ENCODE measurements at regions of chr2 and their contacts with region 1.

Region 1: DNA sequence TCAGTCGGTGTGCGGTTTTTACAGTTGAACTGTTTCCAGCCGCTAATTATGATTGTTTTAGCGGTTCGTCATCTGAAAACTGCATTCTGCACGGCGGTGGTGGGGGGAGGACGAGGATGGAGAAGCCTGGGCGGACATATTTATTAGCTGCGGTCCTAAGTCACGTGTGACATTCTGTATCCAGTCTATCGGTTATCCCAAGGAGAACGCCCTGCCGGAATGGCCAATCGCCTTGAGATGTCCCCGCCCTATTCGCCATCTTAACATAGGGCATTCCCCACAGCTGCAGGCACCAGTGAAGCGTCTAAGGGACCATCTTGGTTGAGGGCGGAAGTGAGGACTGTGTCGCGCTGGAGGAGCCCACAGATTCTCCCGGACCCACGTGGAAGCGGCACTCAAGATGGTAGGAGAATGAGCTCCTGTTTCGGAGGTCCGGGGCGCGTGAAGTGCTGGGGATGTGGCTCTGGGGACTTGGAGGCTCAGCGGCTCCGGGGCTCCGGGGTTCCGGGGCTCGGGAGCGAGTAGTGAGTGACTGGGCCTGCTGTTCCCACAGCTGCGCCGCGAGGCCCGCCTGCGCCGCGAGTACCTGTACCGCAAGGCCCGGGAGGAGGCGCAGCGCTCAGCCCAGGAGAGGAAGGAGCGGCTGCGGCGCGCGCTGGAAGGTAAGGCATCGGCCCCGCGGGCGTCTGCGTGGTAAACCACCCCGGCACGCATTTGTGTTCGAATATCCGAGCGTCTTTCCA is at the start of gene IMP4:
- DNase-seq: peak; percentile 89 to 99 (median 93)
- ATAC-seq: peak; percentile 87
- H3K4me3 ChIP-seq: peak within 1 kb of the TSS; percentile 68
- H3K4me3 Mint-ChIP-seq: peak within 1 kb of the TSS; percentile 93
- H3K27ac ChIP-seq: peak within 1 kb of the TSS; percentile 96 to 97
- H3K27ac Mint-ChIP-seq: peak within 1 kb of the TSS; percentile 99
- H3K4me1 ChIP-seq: peaks cover 34% of the 10 kb centered on the region
- H3K4me1 Mint-ChIP-seq: peaks cover 46% of the 10 kb centered on the region
- H3K27me3 ChIP-seq: no peaks in the 10 kb centered on the region
- H3K27me3 Mint-ChIP-seq: no peaks in the 10 kb centered on the region
- CTCF ChIP-seq: peak; percentile 46
- total RNA-seq, gene IMP4: 81.7 to 88.1 TPM

Region 2: DNA sequence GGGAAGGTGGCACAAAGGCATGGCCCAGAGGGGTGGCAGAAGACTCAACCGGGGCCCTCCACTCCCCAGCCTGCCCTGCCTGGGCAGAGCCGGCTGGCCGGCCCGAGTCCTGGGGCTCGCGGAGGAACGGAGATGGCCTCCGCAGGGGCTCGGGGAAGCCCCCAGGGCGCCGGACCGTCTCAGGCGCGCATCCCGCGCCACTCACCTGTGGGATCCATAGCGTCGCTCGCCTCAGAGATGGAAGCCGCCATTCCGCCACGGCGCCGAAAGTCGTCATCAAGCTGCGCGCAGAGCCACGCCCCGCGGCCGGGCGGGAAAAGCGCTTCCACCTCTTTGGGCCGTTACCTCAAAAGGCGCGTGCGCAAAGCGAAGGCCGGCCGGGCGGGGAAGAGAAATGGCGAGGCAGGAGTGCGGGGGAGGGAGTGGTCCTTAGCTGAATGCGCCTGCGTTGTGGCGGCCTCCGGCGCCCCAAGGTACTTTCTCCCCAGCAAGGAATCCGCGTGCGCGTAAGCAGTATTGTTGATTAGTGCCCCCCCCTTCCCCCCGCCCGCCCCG is 161.3 kb before region 1 on chr2 and contains the start of gene SMPD4:
- CTCF ChIA-PET with region 1: interaction called, 23 read pairs
- POLR2A ChIA-PET with region 1: interaction called, 110 read pairs
- intact Hi-C with region 1: loop called in 1 of 2 experiments (anchors 2 kb)
- DNase-seq: peak; percentile 97 to 99 (median 98)
- ATAC-seq: peak; percentile 76
- H3K4me3 ChIP-seq: peak within 1 kb of the TSS; percentile 66
- H3K4me3 Mint-ChIP-seq: peak within 1 kb of the TSS; percentile 98
- H3K27ac ChIP-seq: peak within 1 kb of the TSS; percentile 75 to 89
- H3K27ac Mint-ChIP-seq: peak within 1 kb of the TSS; percentile 99
- H3K4me1 ChIP-seq: peaks cover 32% of the 10 kb centered on the region
- H3K4me1 Mint-ChIP-seq: peaks cover 26% of the 10 kb centered on the region
- H3K27me3 ChIP-seq: no peaks in the 10 kb centered on the region
- H3K27me3 Mint-ChIP-seq: no peaks in the 10 kb centered on the region
- CTCF ChIP-seq: no peak
- total RNA-seq, gene SMPD4: 81.2 to 89.9 TPM

Region 3: GRCh38 chr2:130231656-130232055 is 111.0 kb before region 1 on chr2:
- CTCF ChIA-PET with region 1: no interaction called
- POLR2A ChIA-PET with region 1: no interaction called
- intact Hi-C with region 1: no loop called
- DNase-seq: no peak
- ATAC-seq: no peak
- H3K4me3 ChIP-seq: no peak overlapping the region
- H3K4me3 Mint-ChIP-seq: no peak overlapping the region
- H3K27ac ChIP-seq: no peak overlapping the region
- H3K27ac Mint-ChIP-seq: no peak overlapping the region
- H3K4me1 ChIP-seq: peaks cover 4% of the 10 kb centered on the region
- H3K4me1 Mint-ChIP-seq: no peaks in the 10 kb centered on the region
- H3K27me3 ChIP-seq: no peaks in the 10 kb centered on the region
- H3K27me3 Mint-ChIP-seq: peaks cover 2% of the 10 kb centered on the region
- CTCF ChIP-seq: no peak

Region 4: GRCh38 chr2:130261970-130262760 is 80.5 kb before region 1 on chr2:
- CTCF ChIA-PET with region 1: no interaction called
- POLR2A ChIA-PET with region 1: no interaction called
- intact Hi-C with region 1: no loop called
- DNase-seq: no peak
- ATAC-seq: no peak
- H3K4me3 ChIP-seq: no peak overlapping the region
- H3K4me3 Mint-ChIP-seq: no peak overlapping the region
- H3K27ac ChIP-seq: no peak overlapping the region
- H3K27ac Mint-ChIP-seq: no peak overlapping the region
- H3K4me1 ChIP-seq: no peaks in the 10 kb centered on the region
- H3K4me1 Mint-ChIP-seq: no peaks in the 10 kb centered on the region
- H3K27me3 ChIP-seq: peaks cover 0 to 8% of the 10 kb centered on the region in 2 experiments
- H3K27me3 Mint-ChIP-seq: peaks cover 13% of the 10 kb centered on the region
- CTCF ChIP-seq: no peak

Region 5: DNA sequence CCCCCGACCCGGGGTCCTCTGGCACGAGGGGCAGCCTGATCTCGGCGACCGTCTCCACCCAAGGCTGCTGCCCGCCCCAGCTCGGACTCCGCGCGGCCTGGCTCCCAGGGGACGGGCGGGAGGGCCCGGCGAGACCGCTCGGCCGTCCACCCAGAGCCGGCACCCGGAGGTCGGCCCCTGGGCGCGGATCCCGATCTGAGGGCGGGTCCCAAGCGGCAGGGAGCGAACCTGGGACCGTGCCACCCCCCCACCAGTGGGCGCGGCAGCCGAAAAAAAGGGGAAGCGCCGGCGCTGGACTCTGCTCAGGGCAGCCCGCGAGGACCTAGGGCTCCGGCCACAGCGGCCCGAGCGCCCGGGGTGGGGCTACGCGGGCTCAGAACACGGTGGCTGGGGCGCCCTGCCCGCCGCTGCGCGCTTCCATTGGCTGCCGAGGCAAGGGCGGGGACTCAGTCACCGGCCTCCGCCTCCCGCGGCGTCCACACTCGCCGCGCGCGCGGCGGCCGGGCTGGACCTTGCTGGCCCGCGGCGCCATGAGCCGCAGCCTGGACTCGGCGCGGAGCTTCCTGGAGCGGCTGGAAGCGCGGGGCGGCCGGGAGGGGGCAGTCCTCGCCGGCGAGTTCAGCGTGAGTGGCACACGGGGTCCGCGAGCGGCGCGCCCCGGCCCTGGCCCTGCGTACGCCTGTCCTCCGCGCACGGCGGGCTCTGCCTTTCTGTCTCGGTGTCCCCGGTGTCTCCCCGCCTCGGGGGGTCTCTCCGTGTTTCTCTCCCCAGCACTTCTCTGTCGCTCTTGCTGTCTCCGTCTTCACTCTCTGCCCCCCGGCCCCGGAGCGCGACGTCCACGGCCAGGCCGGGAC is 13.1 kb after region 1 on chr2 and contains the start of gene PTPN18:
- CTCF ChIA-PET with region 1: interaction called, 6 read pairs
- POLR2A ChIA-PET with region 1: interaction called, 75 read pairs
- intact Hi-C with region 1: no loop called
- DNase-seq: peak in 12 of 14 experiments; percentile 23 to 80 (median 48)
- ATAC-seq: peak; percentile 84
- H3K4me3 ChIP-seq: peak within 1 kb of the TSS; percentile 60
- H3K4me3 Mint-ChIP-seq: peak within 1 kb of the TSS; percentile 89
- H3K27ac ChIP-seq: no peak within 1 kb of the TSS
- H3K27ac Mint-ChIP-seq: no peak within 1 kb of the TSS
- H3K4me1 ChIP-seq: peaks cover 16% of the 10 kb centered on the region
- H3K4me1 Mint-ChIP-seq: peaks cover 17% of the 10 kb centered on the region
- H3K27me3 ChIP-seq: no peaks in the 10 kb centered on the region
- H3K27me3 Mint-ChIP-seq: no peaks in the 10 kb centered on the region
- CTCF ChIP-seq: peak; percentile 42
- total RNA-seq, gene PTPN18: 27.6 to 27.8 TPM

Region 6: GRCh38 chr2:130390460-130391057 is 47.9 kb after region 1 on chr2:
- CTCF ChIA-PET with region 1: no interaction called
- POLR2A ChIA-PET with region 1: interaction called, 12 read pairs
- intact Hi-C with region 1: no loop called
- DNase-seq: no peak
- ATAC-seq: no peak
- H3K4me3 ChIP-seq: peak overlapping the region; percentile 63
- H3K4me3 Mint-ChIP-seq: peak overlapping the region; percentile 87
- H3K27ac ChIP-seq: no peak overlapping the region
- H3K27ac Mint-ChIP-seq: peak overlapping the region; percentile 55
- H3K4me1 ChIP-seq: peaks cover 19% of the 10 kb centered on the region
- H3K4me1 Mint-ChIP-seq: peaks cover 13% of the 10 kb centered on the region
- H3K27me3 ChIP-seq: no peaks in the 10 kb centered on the region
- H3K27me3 Mint-ChIP-seq: peaks cover 15% of the 10 kb centered on the region
- CTCF ChIP-seq: no peak

Region 7: DNA sequence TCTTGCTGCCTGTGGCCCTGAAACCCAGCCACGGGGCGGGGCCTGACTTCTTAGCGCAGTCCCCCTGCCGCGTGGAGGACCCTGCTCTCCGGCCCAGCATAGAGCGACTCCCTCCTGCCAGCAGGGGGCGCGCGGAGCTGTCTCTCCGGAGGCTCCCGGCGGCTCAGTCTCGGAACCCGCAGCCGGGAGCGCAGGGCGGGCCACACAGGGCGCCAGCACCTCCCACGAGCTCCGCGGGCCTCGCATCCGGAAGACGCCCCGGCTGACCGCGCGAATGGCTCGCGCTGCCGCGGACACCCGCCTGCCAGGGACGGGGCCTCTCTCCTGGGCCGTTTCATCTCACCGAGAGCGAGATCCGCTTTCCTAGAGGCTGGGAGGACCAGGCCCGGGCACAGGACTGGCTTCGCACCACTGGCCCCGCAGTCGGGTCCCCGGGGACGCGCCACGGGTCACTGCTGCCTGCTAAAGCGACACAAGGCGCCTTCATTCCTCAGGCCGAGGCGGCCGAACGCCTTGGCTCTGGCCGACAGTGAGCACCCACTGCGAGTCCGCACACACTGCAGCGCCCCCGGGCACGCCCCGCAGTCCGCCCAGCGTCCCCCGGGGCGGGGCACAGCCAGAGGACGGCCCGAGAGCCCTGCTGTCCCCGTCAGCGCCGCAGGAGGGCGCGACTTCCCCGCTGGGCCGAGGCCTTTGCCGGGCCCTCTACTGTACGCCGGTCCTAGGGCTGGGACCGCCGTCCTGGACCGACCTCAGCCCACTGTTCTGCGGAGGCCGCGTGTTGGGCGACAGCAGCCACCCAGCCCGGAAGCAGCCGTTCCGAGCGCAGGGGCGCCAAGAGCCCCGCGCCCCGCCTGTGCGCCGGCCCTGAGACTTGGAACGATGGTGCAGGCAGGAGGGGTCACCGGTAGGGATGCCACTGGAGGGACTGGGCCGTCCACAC is 455.1 kb after region 1 on chr2:
- CTCF ChIA-PET with region 1: no interaction called
- POLR2A ChIA-PET with region 1: interaction called, 13 read pairs
- intact Hi-C with region 1: loop called in 1 of 2 experiments (anchors 5 kb)
- DNase-seq: peak; percentile 84 to 96 (median 90)
- ATAC-seq: peak; percentile 88
- H3K4me3 ChIP-seq: peak overlapping the region; percentile 94
- H3K4me3 Mint-ChIP-seq: peak overlapping the region; percentile 85
- H3K27ac ChIP-seq: peak overlapping the region; percentile 74 to 87
- H3K27ac Mint-ChIP-seq: peak overlapping the region; percentile 71
- H3K4me1 ChIP-seq: peaks cover 17% of the 10 kb centered on the region
- H3K4me1 Mint-ChIP-seq: peaks cover 7% of the 10 kb centered on the region
- H3K27me3 ChIP-seq: peaks cover 0 to 2% of the 10 kb centered on the region in 2 experiments
- H3K27me3 Mint-ChIP-seq: peaks cover 4% of the 10 kb centered on the region
- CTCF ChIP-seq: peak; percentile 68

Region 8: GRCh38 chr2:131105156-131105949 is 762.6 kb after region 1 on chr2 and contains the start of gene PLEKHB2:
- CTCF ChIA-PET with region 1: no interaction called
- POLR2A ChIA-PET with region 1: interaction called, 10 read pairs
- intact Hi-C with region 1: loop called in 1 of 2 experiments (anchors 10 kb)
- DNase-seq: peak; percentile 83 to 96 (median 92)
- ATAC-seq: peak; percentile 61
- H3K4me3 ChIP-seq: peak within 1 kb of the TSS; percentile 97
- H3K4me3 Mint-ChIP-seq: peak within 1 kb of the TSS; percentile 98
- H3K27ac ChIP-seq: peak within 1 kb of the TSS; percentile 94 to 96
- H3K27ac Mint-ChIP-seq: peak within 1 kb of the TSS; percentile 98
- H3K4me1 ChIP-seq: peaks cover 43% of the 10 kb centered on the region
- H3K4me1 Mint-ChIP-seq: peaks cover 58% of the 10 kb centered on the region
- H3K27me3 ChIP-seq: no peaks in the 10 kb centered on the region
- H3K27me3 Mint-ChIP-seq: no peaks in the 10 kb centered on the region
- CTCF ChIP-seq: no peak
- total RNA-seq, gene PLEKHB2: 66.9 to 71.7 TPM